ENCODE measurements at regions of chr1 and their contacts with region 1.

Region 1: DNA sequence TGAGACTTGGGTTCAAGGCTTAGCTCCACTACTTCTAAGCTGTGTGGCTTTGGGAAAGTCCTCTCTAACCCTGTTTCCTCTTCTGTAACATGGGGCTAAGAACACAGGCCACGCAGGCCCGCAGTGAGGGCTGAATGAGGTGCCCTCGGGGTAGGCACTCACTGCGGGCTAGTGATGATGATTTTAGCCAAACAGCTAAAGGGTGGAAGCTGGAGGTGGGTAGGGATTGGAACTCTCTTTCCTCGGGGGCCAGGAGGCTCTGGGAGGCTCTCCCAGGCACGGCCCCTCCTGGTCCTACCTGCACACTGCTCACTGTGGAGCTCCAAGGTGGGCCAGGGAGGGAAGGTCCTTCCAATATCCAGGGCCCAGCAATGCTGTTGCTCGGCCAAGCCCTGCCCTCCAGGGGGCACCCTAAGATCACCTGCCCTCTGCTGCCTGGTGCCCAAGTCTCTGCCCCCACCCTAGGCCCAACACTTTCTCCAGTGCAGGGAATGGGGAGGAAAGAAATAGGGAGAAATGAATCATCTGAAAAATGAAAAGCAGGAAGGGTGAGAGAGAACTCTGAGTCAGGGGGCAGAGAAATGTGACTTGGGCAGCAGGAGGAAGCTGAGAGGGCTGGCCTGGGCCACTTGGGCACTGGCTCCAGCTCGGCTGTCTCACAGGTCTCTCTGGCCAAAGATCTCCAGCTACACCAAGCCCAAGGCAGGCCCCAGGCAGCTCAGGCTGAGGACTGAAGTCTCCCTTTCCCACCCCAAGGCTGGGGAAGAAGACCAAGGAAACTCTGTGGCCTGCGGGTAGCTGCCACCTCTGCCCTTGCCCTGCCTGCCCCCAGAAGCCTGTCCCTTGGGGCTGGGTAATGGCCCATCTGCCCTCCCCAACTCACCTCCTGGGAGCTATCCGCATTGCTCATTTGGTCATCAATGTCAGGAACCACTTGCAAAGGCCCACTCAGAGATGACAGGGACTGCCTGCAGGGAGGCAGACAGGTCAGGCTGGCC is 19.3 kb upstream of the EVA1B start:
- DNase-seq: peak; percentile 44 to 61
- ATAC-seq: peak; percentile 83 to 92
- H3K4me3 ChIP-seq: no peak overlapping the region
- H3K27ac ChIP-seq: peak overlapping the region; percentile 45 to 78; a peak in 4 of 6 replicates
- H3K4me1 ChIP-seq: peaks cover 10% of the 10 kb centered on the region
- CTCF ChIP-seq: peak; percentile 79
- EP300 ChIP-seq: no peak
- POLR2A ChIP-seq: no peak
- RAD21 ChIP-seq: peak; percentile 89 to 94

Region 2: GRCh38 chr1:36269408-36269838 is 73.4 kb before region 1 on chr1:
- CTCF ChIA-PET with region 1: no interaction called
- POLR2A ChIA-PET with region 1: no interaction called
- DNase-seq: peak in 1 of 2 experiments; percentile 47
- ATAC-seq: peak; percentile 62 to 81; a peak in 4 of 6 replicates
- H3K4me3 ChIP-seq: no peak overlapping the region
- H3K27ac ChIP-seq: peak overlapping the region in 1 of 2 experiments; percentile 56; a peak in 1 of 6 replicates
- H3K4me1 ChIP-seq: peaks cover 30% of the 10 kb centered on the region
- CTCF ChIP-seq: no peak
- EP300 ChIP-seq: no peak
- POLR2A ChIP-seq: no peak
- RAD21 ChIP-seq: no peak

Region 3: DNA sequence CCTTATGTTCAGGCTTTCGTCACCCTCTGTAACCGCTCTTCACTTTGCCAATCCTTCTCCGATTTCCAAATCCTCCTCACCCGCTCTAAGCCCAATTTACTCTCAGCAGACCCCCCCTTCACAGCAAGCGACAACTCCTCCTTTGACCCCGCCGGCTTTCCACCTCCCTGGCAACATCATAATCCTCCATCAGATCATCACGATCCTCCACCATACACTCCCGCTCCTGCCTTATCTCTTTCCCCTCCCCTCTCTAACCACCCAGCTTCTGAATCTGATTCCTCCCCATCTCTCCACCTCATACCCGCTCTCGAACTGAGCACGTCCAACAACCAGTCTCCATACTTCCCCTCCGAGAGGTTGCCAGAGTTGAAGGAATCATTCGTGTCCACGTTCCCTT is 11.8 kb before region 1 on chr1:
- CTCF ChIA-PET with region 1: interaction called, 33 read pairs
- POLR2A ChIA-PET with region 1: no interaction called
- DNase-seq: no peak
- ATAC-seq: no peak
- H3K4me3 ChIP-seq: no peak overlapping the region
- H3K27ac ChIP-seq: no peak overlapping the region
- H3K4me1 ChIP-seq: no peaks in the 10 kb centered on the region
- CTCF ChIP-seq: no peak
- EP300 ChIP-seq: no peak
- POLR2A ChIP-seq: no peak
- RAD21 ChIP-seq: no peak

Region 4: GRCh38 chr1:36369061-36369861 is 26.5 kb after region 1 on chr1:
- CTCF ChIA-PET with region 1: interaction called, 201 read pairs
- POLR2A ChIA-PET with region 1: no interaction called
- DNase-seq: peak; percentile 52 to 85
- ATAC-seq: peak; percentile 55 to 69; a peak in 5 of 6 replicates
- H3K4me3 ChIP-seq: no peak overlapping the region
- H3K27ac ChIP-seq: peak overlapping the region in 1 of 2 experiments; percentile 61; a peak in 3 of 6 replicates
- H3K4me1 ChIP-seq: peaks cover 38% of the 10 kb centered on the region
- CTCF ChIP-seq: peak; percentile 65
- EP300 ChIP-seq: no peak
- POLR2A ChIP-seq: no peak
- RAD21 ChIP-seq: peak; percentile 59 to 68

Region 5: GRCh38 chr1:36397378-36398230 is 54.8 kb after region 1 on chr1 and contains the start of gene LSM10:
- CTCF ChIA-PET with region 1: interaction called, 14 read pairs
- POLR2A ChIA-PET with region 1: no interaction called
- DNase-seq: peak; percentile 68 to 90
- ATAC-seq: peak; percentile 97
- H3K4me3 ChIP-seq: peak within 1 kb of the TSS; percentile 67
- H3K27ac ChIP-seq: peak within 1 kb of the TSS; percentile 88 to 99
- H3K4me1 ChIP-seq: peaks cover 9% of the 10 kb centered on the region; the same call in 1 of the 3 replicates
- CTCF ChIP-seq: no peak
- EP300 ChIP-seq: no peak
- POLR2A ChIP-seq: peak; percentile 68
- RAD21 ChIP-seq: no peak; a peak in 1 of 5 replicates
- polyA plus RNA-seq, gene LSM10: 44.3 and 54.9 TPM in 2 replicates

Region 6: GRCh38 chr1:36420836-36421664 is 78.3 kb after region 1 on chr1:
- CTCF ChIA-PET with region 1: interaction called, 53 read pairs
- POLR2A ChIA-PET with region 1: no interaction called
- DNase-seq: peak; percentile 42 to 80
- ATAC-seq: peak; percentile 98 to 99
- H3K4me3 ChIP-seq: no peak overlapping the region
- H3K27ac ChIP-seq: peak overlapping the region; percentile 48 to 75; a peak in 5 of 6 replicates
- H3K4me1 ChIP-seq: peaks cover 7% of the 10 kb centered on the region; the same call in 2 of the 3 replicates
- CTCF ChIP-seq: peak; percentile 78
- EP300 ChIP-seq: no peak
- POLR2A ChIP-seq: no peak
- RAD21 ChIP-seq: peak; percentile 91 to 95